Activated naive CD4-positive, alpha-beta T cell treated with anti-CD3 and anti-CD28 coated beads, Interleukin-2, amount 10 ng/mL, durations not matched to agents 7 days and 5 days (primary cell): ENCODE measurements at regions of chr7 and their contacts with region 1.

Region 1: DNA sequence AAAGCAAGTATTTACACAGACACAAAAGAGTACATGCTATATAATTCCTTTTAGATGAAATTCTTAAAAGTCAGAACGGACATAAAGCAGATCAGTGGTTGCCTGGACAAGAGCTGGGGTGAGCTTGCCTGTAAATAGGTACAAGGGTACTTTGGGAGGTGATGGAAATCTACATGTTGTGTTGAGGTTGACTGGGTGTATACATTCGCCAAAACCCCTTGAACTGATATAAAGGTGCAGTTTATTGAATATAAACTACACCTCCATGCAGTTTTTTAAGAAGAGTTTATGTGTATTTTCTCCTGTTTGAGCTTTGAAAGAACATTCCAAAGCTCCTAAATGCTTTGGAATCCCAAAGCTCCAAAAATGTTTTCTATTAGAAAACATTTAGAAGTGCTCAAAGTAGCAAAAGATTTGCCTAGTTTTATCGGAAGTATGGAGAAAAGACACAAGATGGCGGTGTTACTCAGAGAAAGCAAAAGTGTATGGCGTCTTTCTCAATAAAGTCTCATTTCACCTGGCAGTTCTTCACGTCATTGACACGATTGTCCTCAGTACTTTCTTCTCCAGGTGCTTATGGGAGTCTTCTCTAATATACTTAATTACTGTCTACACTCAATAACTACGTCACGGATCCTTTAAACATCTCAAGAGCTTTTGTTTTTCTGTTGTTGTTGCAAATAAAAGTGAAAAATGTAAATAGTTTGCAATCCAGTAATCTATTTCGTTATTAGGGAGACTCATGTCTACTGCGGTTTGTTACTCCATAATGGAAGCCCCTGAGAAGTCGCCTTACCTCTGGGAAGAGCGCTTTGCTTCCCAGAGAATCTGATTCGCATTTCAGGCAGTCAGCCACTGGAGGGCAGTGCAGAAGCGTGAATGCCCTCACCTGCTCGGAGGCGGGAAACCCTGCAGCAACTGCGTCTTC is 14.7 kb upstream of the SEC61G start:
- DNase-seq: peak; percentile 78
- H3K4me3 Mint-ChIP-seq: peak overlapping the region; percentile 70
- H3K27ac Mint-ChIP-seq: no peak overlapping the region
- H3K4me1 Mint-ChIP-seq: peaks cover 7% of the 10 kb centered on the region
- H3K27me3 Mint-ChIP-seq: peaks cover 23% of the 10 kb centered on the region

Region 2: GRCh38 chr7:54738737-54739136 is 35.0 kb before region 1 on chr7:
- CTCF ChIA-PET with region 1: no interaction called
- DNase-seq: no peak
- H3K4me3 Mint-ChIP-seq: no peak overlapping the region
- H3K27ac Mint-ChIP-seq: no peak overlapping the region
- H3K4me1 Mint-ChIP-seq: no peaks in the 10 kb centered on the region
- H3K27me3 Mint-ChIP-seq: no peaks in the 10 kb centered on the region

Region 3: GRCh38 chr7:54758702-54759592 is 14.8 kb before region 1 on chr7 and contains the start of gene SEC61G:
- CTCF ChIA-PET with region 1: interaction called, 28 read pairs
- DNase-seq: peak; percentile 97
- H3K4me3 Mint-ChIP-seq: peak within 1 kb of the TSS; percentile 100
- H3K27ac Mint-ChIP-seq: peak within 1 kb of the TSS; percentile 96
- H3K4me1 Mint-ChIP-seq: peaks cover 36% of the 10 kb centered on the region
- H3K27me3 Mint-ChIP-seq: peaks cover 12% of the 10 kb centered on the region

Region 4: GRCh38 chr7:54788664-54789063 is 14.9 kb after region 1 on chr7:
- CTCF ChIA-PET with region 1: interaction called, 12 read pairs
- DNase-seq: peak; percentile 26
- H3K4me3 Mint-ChIP-seq: no peak overlapping the region
- H3K27ac Mint-ChIP-seq: no peak overlapping the region
- H3K4me1 Mint-ChIP-seq: no peaks in the 10 kb centered on the region
- H3K27me3 Mint-ChIP-seq: peaks cover 8% of the 10 kb centered on the region

Region 5: GRCh38 chr7:54802841-54803240 is 29.1 kb after region 1 on chr7:
- CTCF ChIA-PET with region 1: no interaction called
- DNase-seq: no peak
- H3K4me3 Mint-ChIP-seq: no peak overlapping the region
- H3K27ac Mint-ChIP-seq: no peak overlapping the region
- H3K4me1 Mint-ChIP-seq: no peaks in the 10 kb centered on the region
- H3K27me3 Mint-ChIP-seq: peaks cover 3% of the 10 kb centered on the region

Region 6: GRCh38 chr7:54814401-54814800 is 40.7 kb after region 1 on chr7:
- CTCF ChIA-PET with region 1: no interaction called
- DNase-seq: no peak
- H3K4me3 Mint-ChIP-seq: no peak overlapping the region
- H3K27ac Mint-ChIP-seq: no peak overlapping the region
- H3K4me1 Mint-ChIP-seq: no peaks in the 10 kb centered on the region
- H3K27me3 Mint-ChIP-seq: no peaks in the 10 kb centered on the region